ENCODE measurements at regions of chrX and their contacts with region 1.

Region 1: DNA sequence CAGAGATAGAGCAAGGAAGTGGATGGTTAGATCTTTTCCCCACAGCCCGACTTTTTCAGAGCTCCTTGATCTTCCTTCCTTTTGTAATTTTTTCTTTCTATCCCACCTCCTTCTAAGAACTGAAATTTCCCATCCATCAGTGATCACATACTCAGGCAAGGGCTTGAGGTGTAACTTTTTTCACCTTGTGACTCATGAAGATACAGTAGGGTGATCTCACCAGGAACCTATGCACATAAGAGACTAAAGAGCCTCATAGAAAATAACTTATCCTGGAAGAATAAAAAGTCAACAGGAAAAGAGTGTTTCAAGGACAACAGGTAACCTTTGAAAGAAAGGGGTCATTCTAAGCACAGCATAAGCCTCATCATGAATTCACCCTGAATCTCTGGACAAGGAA is 131.2 kb upstream of the HCCS start:
- DNase-seq: no peak
- ATAC-seq: no peak
- H3K4me3 ChIP-seq: no peak overlapping the region
- H3K27ac ChIP-seq: no peak overlapping the region
- H3K4me1 ChIP-seq: peaks cover 35% of the 10 kb centered on the region
- H3K27me3 ChIP-seq: no peaks in the 10 kb centered on the region
- CTCF ChIP-seq: no peak
- EP300 ChIP-seq: no peak
- POLR2A ChIP-seq: no peak
- RAD21 ChIP-seq: no peak

Region 2: DNA sequence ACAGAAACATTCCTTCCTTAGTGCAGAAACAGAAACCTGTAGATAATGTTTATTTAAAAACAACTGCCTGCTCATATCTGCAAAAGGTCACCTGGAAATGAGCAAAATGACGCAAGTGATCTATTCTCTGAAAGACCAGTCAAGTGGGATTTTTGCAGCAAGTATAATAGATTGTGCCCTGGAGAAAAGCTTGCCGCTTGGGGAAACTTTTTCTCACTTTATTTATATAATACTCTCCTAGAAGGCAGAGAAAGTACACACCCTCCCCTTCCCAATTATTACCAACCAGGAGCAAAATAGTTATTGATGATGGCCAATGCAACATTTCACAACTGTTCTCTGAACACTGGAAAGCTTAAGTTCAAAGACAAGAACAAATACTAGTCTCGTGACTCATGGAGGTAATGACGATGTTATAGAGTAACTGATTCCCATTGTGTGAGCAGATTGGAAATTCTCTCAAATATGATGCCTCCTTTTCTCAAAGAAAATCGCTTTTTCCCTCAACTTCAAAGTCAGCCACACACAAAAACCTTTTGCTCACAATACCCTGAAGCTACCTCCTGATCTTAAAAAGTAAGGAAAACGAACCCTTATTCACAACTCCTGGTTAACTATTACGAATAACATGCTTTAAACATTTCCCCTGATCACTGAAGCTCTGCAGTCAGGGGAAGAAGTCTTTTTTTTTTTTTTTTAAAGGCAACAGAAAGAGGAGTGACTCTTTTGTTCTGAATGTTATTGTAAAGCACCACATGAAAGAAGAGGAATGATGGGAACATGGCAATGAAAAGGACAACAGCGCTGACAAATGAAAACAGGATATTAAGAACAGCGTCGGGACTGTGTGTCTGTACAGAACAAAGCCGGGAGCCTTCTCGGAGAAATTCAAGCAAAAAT is 400.6 kb before region 1 on chrX:
- CTCF ChIA-PET with region 1: no interaction called
- POLR2A ChIA-PET with region 1: no interaction called
- in situ Hi-C with region 1: no loop called
- intact Hi-C with region 1: no loop called
- DNase-seq: peak; percentile 62
- ATAC-seq: no peak
- H3K4me3 ChIP-seq: no peak overlapping the region; a peak in 1 of 6 replicates
- H3K27ac ChIP-seq: no peak overlapping the region
- H3K4me1 ChIP-seq: peaks cover 8% of the 10 kb centered on the region; the same call in 1 of the 2 replicates
- H3K27me3 ChIP-seq: no peaks in the 10 kb centered on the region
- CTCF ChIP-seq: no peak
- EP300 ChIP-seq: no peak
- POLR2A ChIP-seq: no peak
- RAD21 ChIP-seq: no peak

Region 3: GRCh38 chrX:10992110-10992509 is 12.2 kb after region 1 on chrX:
- CTCF ChIA-PET with region 1: no interaction called
- POLR2A ChIA-PET with region 1: interaction called, 8 read pairs
- in situ Hi-C with region 1: no loop called
- intact Hi-C with region 1: loop called (anchors 1 kb)
- DNase-seq: peak; percentile 70
- ATAC-seq: peak; percentile 94
- H3K4me3 ChIP-seq: no peak overlapping the region
- H3K27ac ChIP-seq: peak overlapping the region; percentile 64
- H3K4me1 ChIP-seq: peaks cover 30% of the 10 kb centered on the region
- H3K27me3 ChIP-seq: no peaks in the 10 kb centered on the region
- CTCF ChIP-seq: no peak
- EP300 ChIP-seq: peak in 1 of 2 experiments; percentile 64; a peak in 2 of 4 replicates
- POLR2A ChIP-seq: no peak
- RAD21 ChIP-seq: no peak

Measured in HepG2 (cell line).